Mammary epithelial cell (primary cell): ENCODE measurements at regions of chr3 and their contacts with region 1.

Region 1: GRCh38 chr3:195692354-195692685 is 28.5 kb upstream of the MUC20 start:
- DNase-seq: no peak
- H3K4me3 ChIP-seq: no peak overlapping the region
- H3K27ac ChIP-seq: no peak overlapping the region
- H3K4me1 ChIP-seq: no peaks in the 10 kb centered on the region
- H3K27me3 ChIP-seq: no peaks in the 10 kb centered on the region
- CTCF ChIP-seq: no peak

Region 2: GRCh38 chr3:195956571-195956970 is 264.3 kb after region 1 on chr3:
- CTCF ChIA-PET with region 1: no interaction called
- dilution Hi-C with region 1: no loop called
- in situ Hi-C with region 1: loop called in 1 of 2 experiments (anchors 25 kb)
- intact Hi-C with region 1: loop called (anchors 5 kb)
- DNase-seq: no peak
- H3K4me3 ChIP-seq: no peak overlapping the region
- H3K27ac ChIP-seq: no peak overlapping the region
- H3K4me1 ChIP-seq: no peaks in the 10 kb centered on the region
- H3K27me3 ChIP-seq: no peaks in the 10 kb centered on the region
- CTCF ChIP-seq: no peak